ENCODE measurements at regions of chr15 and their contacts with region 1.

Region 1: GRCh38 chr15:94230956-94231722 is at the start of gene MCTP2:
- DNase-seq: peak; percentile 86
- H3K4me3 Mint-ChIP-seq: peak within 1 kb of the TSS; percentile 88
- H3K27ac Mint-ChIP-seq: peak within 1 kb of the TSS; percentile 99
- H3K4me1 Mint-ChIP-seq: peaks cover 87% of the 10 kb centered on the region
- H3K27me3 Mint-ChIP-seq: no peaks in the 10 kb centered on the region
- total RNA-seq, gene MCTP2: 93.2 and 96.0 TPM in 2 replicates

Region 2: GRCh38 chr15:94163999-94164807 is 66.9 kb before region 1 on chr15:
- intact Hi-C with region 1: loop called (anchors 1 kb)
- DNase-seq: peak; percentile 44
- H3K4me3 Mint-ChIP-seq: no peak overlapping the region
- H3K27ac Mint-ChIP-seq: no peak overlapping the region
- H3K4me1 Mint-ChIP-seq: peaks cover 10% of the 10 kb centered on the region
- H3K27me3 Mint-ChIP-seq: peaks cover 2% of the 10 kb centered on the region

Region 3: GRCh38 chr15:94206463-94207167 is 24.5 kb before region 1 on chr15:
- intact Hi-C with region 1: loop called (anchors 1 kb)
- DNase-seq: peak; percentile 69
- H3K4me3 Mint-ChIP-seq: peak overlapping the region; percentile 79
- H3K27ac Mint-ChIP-seq: peak overlapping the region; percentile 97
- H3K4me1 Mint-ChIP-seq: peaks cover 41% of the 10 kb centered on the region
- H3K27me3 Mint-ChIP-seq: no peaks in the 10 kb centered on the region

Region 4: GRCh38 chr15:94272251-94272898 is 41.2 kb after region 1 on chr15:
- intact Hi-C with region 1: loop called (anchors 1 kb)
- DNase-seq: no peak
- H3K4me3 Mint-ChIP-seq: no peak overlapping the region
- H3K27ac Mint-ChIP-seq: no peak overlapping the region
- H3K4me1 Mint-ChIP-seq: peaks cover 12% of the 10 kb centered on the region
- H3K27me3 Mint-ChIP-seq: no peaks in the 10 kb centered on the region

Region 5: DNA sequence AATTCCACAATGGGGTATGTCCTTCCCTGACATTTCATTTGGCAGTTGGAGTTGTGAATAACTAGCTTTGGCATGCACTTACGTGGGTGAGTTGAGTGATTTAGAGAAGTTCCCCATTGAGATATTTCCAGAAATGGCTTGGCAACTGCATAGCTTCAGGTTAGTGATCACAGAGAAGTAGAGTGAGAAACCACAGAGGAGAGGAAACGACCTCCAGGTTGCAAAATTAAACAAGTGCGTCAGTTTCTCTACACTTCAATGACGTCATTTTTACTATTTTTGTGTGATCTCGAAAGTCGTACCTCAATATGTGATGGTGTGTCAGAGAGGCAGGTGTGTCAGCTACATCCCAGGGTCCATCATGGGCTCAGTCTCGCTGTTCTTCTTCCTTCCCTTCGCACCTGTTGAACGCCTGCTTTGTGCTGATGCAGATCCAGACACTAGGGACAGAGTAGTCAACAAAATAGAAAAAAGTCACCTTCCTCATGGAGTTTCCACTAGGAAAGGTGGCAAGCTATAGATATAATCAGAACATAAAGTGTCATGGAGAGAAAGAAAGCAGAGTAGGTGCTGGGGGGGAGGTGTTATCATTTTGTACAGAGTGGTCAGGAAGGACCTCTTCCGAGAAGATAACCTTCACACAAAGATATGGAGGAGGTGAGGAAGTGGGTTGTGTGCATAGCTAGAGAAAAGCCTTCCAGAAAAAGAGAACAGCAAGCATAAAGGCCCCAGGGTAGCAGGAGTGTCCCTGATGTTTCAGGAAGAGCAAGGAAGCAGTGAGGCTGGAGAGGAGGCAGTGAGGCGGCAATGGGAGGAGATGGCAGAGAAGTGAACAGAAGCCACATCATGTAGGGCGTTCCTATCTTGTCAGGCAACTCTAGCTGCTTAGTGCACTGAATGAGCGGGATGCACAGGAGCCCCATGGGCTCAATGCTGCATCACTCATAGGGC is 75.8 kb after region 1 on chr15:
- intact Hi-C with region 1: loop called (anchors 1 kb)
- DNase-seq: peak; percentile 36
- H3K4me3 Mint-ChIP-seq: peak overlapping the region; percentile 38
- H3K27ac Mint-ChIP-seq: peak overlapping the region; percentile 98
- H3K4me1 Mint-ChIP-seq: peaks cover 79% of the 10 kb centered on the region
- H3K27me3 Mint-ChIP-seq: no peaks in the 10 kb centered on the region